ENCODE measurements at regions of chr10 and their contacts with region 1.

Region 1: DNA sequence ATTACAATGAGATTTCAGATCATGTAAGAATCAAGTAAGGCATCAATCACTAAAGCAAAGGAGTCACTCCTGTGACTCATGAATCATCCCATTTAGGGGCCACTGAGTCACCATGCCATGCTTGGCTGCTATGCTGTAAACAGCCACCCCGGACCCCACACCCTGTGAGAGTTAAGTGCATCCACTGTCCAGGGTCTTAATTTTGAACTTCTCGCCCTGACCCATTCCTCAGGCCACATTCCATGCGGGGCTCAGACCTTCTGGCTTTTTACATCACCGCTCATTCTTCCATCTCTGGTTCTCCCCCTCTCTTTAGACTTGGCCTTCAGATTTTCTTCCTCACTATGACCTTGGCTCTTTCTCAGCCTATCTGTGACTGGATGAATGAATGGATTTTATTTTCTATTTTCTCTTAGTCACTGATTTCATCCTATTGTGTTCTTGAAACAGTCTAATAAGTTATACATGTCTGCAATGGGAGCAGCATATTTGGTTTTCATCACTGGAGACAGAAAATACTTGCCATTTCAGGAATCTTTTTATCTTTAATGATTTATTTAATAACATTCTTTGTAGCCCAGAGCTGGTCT is 239.6 kb downstream of the SKIDA1 start:
- DNase-seq: no peak
- ATAC-seq: no peak
- H3K4me3 ChIP-seq: no peak overlapping the region
- H3K27ac ChIP-seq: no peak overlapping the region
- H3K4me1 ChIP-seq: no peaks in the 10 kb centered on the region
- H3K27me3 ChIP-seq: no peaks in the 10 kb centered on the region
- CTCF ChIP-seq: no peak

Region 2: DNA sequence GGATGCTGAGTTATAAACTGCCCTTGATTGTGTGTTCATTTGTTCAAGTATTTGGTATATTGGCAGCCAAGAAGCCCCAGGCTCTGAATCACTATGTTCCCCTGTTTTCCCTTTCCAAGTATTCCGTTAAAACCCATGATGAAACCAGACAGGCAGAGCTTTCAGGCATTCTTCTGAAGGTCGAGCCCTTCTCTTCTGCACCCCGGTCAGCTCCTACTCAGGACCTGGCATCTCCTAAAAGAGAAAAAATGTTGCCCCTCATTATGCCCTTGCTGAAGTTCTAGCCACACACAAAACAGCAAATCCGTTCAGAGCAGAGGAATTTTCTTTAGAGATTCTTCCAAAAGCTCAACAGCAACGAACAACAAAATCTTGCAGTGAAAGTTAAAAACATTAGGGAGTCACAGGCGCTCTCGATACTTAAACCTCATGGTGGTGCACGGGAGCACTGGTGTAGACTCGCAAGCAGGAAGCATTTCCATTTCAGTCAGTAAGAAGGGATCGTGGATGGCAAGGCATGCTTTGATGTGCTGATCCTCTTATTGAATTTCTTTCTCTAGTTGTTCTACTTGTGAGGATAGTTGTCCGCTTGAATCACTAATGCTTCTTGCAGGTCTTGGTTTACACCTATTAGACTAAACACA is 25.2 kb before region 1 on chr10:
- intact Hi-C with region 1: no loop called
- DNase-seq: no peak
- ATAC-seq: no peak
- H3K4me3 ChIP-seq: no peak overlapping the region
- H3K27ac ChIP-seq: no peak overlapping the region
- H3K4me1 ChIP-seq: no peaks in the 10 kb centered on the region
- H3K27me3 ChIP-seq: no peaks in the 10 kb centered on the region
- CTCF ChIP-seq: no peak

Region 3: DNA sequence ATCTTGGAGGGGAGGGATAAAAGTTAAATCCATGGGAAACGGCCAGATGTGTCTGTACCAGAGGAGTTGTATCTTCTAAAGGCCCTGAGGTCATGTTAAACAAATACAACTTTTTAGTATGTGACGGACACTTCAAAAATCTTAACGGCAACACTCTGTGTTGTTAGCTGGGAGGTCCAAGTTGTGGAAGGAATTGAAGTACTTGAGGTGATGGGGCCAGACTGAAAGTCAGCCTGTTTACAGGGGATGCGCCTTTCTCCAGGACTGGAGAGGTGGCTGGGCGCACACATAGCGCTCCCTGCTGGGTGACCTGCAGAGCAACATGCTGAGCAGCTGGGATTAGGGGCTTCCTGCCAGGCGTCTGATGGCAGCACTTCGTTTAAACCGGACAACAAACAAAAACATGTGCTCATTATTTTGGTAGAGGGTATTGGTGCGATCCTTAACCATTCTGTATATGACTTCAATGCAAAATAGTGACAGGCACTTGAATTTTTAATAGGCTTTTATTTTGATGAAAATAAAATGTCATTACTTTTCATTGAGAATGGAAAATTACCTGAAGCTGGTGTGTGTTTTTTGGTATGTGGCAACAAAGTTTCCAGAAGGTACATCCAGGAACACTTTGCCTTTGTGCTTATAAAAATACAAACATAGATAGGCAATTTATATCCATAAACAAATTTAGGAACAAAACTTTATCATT is 446.4 kb after region 1 on chr10:
- intact Hi-C with region 1: loop called in 1 of 2 experiments (anchors 10 kb)
- DNase-seq: peak; percentile 52 to 82
- ATAC-seq: peak; percentile 87 to 97 (median 94)
- H3K4me3 ChIP-seq: no peak overlapping the region
- H3K27ac ChIP-seq: no peak overlapping the region
- H3K4me1 ChIP-seq: no peaks in the 10 kb centered on the region
- H3K27me3 ChIP-seq: no peaks in the 10 kb centered on the region
- CTCF ChIP-seq: peak; percentile 85

Measured in psoas muscle (tissue), 8 donors.